Caki2 (cell line): ENCODE measurements at regions of chr12 and their contacts with region 1.

Region 1: GRCh38 chr12:71746983-71747611 is 7.6 kb upstream of the RAB21 start:
- DNase-seq: peak; percentile 51

Region 2: DNA sequence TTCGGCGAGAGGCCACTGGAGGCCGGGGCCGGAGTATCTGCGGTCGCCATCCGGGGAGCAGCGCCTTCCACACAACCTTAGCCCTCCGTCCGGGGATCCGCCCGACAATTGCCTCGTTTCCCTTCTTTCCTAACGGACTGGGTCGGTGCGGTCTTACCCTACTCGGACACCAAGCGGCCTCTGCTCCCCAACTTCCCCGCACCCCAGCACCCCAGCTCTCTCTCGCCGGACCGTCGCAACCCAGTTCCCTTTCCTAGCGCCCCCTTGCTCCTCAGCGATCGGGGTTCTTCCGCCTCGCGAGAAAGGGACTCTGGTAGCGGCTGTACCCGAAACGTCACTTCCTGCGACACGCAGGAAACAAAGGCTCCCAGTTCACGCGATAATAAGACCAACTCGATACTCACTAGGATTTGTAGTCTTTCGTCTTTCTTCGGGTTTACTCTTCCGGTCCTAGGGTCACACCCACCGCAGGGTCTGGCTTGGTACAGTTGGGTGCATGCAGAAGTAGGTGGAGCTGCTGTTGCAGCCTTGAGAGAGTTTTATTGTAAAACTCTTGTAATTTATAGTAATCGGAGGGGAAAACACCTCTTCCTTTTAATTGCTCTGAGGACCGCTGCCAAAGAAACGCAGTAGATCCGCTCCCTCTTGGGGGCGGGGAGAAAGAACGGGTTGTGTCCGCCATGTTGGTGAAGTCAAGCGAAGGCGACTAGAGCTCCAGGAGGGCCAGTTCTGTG is 83.4 kb before region 1 on chr12 and contains the start of gene ZFC3H1:
- in situ Hi-C with region 1: loop called (anchors 5 kb)
- DNase-seq: peak; percentile 100
- total RNA-seq, gene ZFC3H1: 3.2 and 9.8 TPM in 2 replicates